Posterior vena cava (tissue), 2 donors: ENCODE measurements at regions of chr1 and their contacts with region 1.

Region 1: GRCh38 chr1:150464422-150464826 is 22.8 kb upstream of the TARS2 start:
- DNase-seq: no peak

Region 2: GRCh38 chr1:150441121-150441520 is 23.3 kb before region 1 on chr1:
- intact Hi-C with region 1: loop called in 1 of 2 experiments (anchors 1 kb)
- DNase-seq: no peak

Region 3: GRCh38 chr1:150529017-150529416 is 64.6 kb after region 1 on chr1:
- intact Hi-C with region 1: no loop called
- DNase-seq: no peak

Region 4: DNA sequence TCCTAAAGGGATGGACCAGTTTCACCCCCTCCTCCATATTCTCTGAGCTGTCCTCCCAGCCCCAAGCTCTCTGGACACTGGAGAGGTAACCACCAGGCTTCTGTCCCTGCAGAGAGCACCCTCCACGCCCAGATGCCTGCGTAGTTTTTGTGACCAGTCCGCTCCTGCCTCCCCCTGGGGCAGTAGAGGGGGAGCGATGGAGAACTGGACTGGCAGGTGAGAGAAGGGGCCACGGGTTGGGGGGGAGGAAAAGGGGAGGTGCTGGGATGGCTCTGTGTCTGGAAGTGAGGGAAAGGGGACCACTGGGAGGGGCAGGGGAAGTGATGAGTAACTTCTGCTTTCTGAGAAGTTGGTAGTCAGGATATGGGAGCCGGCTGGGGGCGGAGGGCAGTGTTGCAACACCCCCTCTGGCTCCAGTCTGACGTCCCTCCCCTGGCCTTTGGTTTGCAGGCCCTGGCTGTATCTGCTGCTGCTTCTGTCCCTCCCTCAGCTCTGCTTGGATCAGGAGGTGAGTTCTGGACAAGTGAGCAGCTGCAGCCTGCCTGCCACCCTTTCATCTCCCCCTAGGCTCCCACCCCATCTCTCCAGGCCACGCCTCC is 87.8 kb after region 1 on chr1:
- intact Hi-C with region 1: loop called in 1 of 2 experiments (anchors 10 kb)
- DNase-seq: peak; percentile 97